ENCODE measurements at regions of chr13 and their contacts with region 1.

Region 1: DNA sequence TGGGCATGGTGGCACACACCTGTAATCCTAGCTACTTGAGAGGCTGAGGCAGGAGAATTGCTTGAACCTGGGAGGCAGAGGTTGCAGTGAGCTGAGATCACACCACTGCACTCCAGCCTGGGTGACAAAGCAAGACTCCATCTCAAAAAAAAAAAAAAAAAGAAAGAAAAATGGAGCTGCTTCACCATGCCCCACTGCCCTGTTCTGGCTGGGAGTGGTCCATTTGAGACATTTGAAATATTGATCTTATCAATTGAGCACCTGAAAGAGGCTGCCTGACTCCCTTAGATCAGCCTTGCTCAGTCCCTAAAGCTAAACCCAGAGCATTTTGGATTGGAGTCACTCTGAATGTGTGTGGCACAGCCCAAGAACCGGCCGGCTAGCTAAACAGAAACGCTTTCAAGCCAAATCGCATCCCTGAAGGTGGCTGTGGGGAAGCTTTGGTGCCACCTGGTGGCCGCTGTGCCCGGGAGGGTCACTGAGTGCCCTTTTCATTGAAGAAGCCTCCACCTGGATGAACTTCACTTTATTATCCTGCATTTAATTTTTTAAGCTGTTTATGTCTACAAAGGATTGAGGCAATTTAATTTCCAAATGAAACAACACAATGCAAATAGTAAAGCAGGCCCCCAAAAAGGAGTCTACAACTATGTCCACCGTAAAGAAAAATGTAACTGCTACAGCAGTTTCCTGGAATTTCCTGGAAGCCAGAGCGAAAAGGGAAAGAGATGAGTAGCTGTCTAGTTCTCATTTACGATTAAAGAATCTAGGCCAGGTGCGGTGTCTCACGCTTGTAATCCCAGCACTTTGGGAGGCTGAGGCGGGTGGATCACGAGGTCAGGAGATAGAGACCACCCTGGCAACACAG is 53.1 kb upstream of the SERPINE3 start:
- DNase-seq: no peak
- H3K4me3 ChIP-seq: no peak overlapping the region
- CTCF ChIP-seq: peak; percentile 95

Region 2: GRCh38 chr13:51148952-51149573 is 137.3 kb before region 1 on chr13:
- CTCF ChIA-PET with region 1: interaction called, 173 read pairs
- POLR2A ChIA-PET with region 1: no interaction called
- DNase-seq: peak; percentile 28
- H3K4me3 ChIP-seq: no peak overlapping the region
- CTCF ChIP-seq: peak; percentile 47

Region 3: GRCh38 chr13:51235756-51236490 is 50.4 kb before region 1 on chr13:
- CTCF ChIA-PET with region 1: interaction called, 10 read pairs
- POLR2A ChIA-PET with region 1: no interaction called
- DNase-seq: no peak
- H3K4me3 ChIP-seq: no peak overlapping the region
- CTCF ChIP-seq: no peak

Region 4: GRCh38 chr13:51269039-51269438 is 17.3 kb before region 1 on chr13:
- CTCF ChIA-PET with region 1: interaction called, 51 read pairs
- POLR2A ChIA-PET with region 1: no interaction called
- DNase-seq: no peak
- H3K4me3 ChIP-seq: no peak overlapping the region
- CTCF ChIP-seq: no peak

Region 5: GRCh38 chr13:51303063-51303552 is 16.7 kb after region 1 on chr13:
- CTCF ChIA-PET with region 1: interaction called, 77 read pairs
- POLR2A ChIA-PET with region 1: no interaction called
- DNase-seq: no peak
- H3K4me3 ChIP-seq: no peak overlapping the region
- CTCF ChIP-seq: no peak

Region 6: GRCh38 chr13:51797664-51798488 is 511.5 kb after region 1 on chr13:
- CTCF ChIA-PET with region 1: interaction called, 18 read pairs
- POLR2A ChIA-PET with region 1: no interaction called
- DNase-seq: no peak
- H3K4me3 ChIP-seq: no peak overlapping the region
- CTCF ChIP-seq: peak; percentile 42

Measured in AG04449 (cell line).